Naive thymus-derived CD4-positive, alpha-beta T cell (primary cell): ENCODE measurements at regions of chr2 and their contacts with region 1.

Region 1: GRCh38 chr2:24490674-24491625 is at the start of gene NCOA1:
- DNase-seq: peak; percentile 82 to 92 (median 90)
- ATAC-seq: peak; percentile 91
- H3K4me3 ChIP-seq: peak within 1 kb of the TSS; percentile 63
- H3K4me3 Mint-ChIP-seq: peak within 1 kb of the TSS; percentile 80 to 95 (median 90)
- H3K27ac ChIP-seq: peak within 1 kb of the TSS; percentile 93
- H3K27ac Mint-ChIP-seq: peak within 1 kb of the TSS; percentile 87 to 98 (median 93)
- H3K4me1 ChIP-seq: peaks cover 26 to 48% of the 10 kb centered on the region in 2 donors
- H3K4me1 Mint-ChIP-seq: peaks cover 46 to 62% (median 59%) of the 10 kb centered on the region in 7 donors
- H3K27me3 ChIP-seq: no peaks in the 10 kb centered on the region
- H3K27me3 Mint-ChIP-seq: peaks cover 0 to 11% (median 0%) of the 10 kb centered on the region in 5 donors
- total RNA-seq, gene NCOA1: 20.9 to 72.8 (median 46.6) TPM

Region 2: GRCh38 chr2:24360050-24360962 is 130.6 kb before region 1 on chr2 and contains the start of gene ITSN2:
- CTCF ChIA-PET with region 1: no interaction called
- POLR2A ChIA-PET with region 1: no interaction called
- intact Hi-C with region 1: loop called (anchors 1 kb)
- DNase-seq: peak; percentile 76 to 88 (median 83)
- ATAC-seq: peak; percentile 92
- H3K4me3 ChIP-seq: peak within 1 kb of the TSS; percentile 77
- H3K4me3 Mint-ChIP-seq: peak within 1 kb of the TSS; percentile 88 to 98 (median 92)
- H3K27ac ChIP-seq: peak within 1 kb of the TSS; percentile 99
- H3K27ac Mint-ChIP-seq: peak within 1 kb of the TSS; percentile 91 to 97 (median 95)
- H3K4me1 ChIP-seq: peaks cover 1 to 16% of the 10 kb centered on the region in 2 donors
- H3K4me1 Mint-ChIP-seq: peaks cover 22 to 44% (median 31%) of the 10 kb centered on the region in 7 donors
- H3K27me3 ChIP-seq: no peaks in the 10 kb centered on the region
- H3K27me3 Mint-ChIP-seq: peaks cover 0 to 3% (median 0%) of the 10 kb centered on the region in 5 donors
- total RNA-seq, gene ITSN2: 79.2 to 133 (median 106) TPM

Region 3: DNA sequence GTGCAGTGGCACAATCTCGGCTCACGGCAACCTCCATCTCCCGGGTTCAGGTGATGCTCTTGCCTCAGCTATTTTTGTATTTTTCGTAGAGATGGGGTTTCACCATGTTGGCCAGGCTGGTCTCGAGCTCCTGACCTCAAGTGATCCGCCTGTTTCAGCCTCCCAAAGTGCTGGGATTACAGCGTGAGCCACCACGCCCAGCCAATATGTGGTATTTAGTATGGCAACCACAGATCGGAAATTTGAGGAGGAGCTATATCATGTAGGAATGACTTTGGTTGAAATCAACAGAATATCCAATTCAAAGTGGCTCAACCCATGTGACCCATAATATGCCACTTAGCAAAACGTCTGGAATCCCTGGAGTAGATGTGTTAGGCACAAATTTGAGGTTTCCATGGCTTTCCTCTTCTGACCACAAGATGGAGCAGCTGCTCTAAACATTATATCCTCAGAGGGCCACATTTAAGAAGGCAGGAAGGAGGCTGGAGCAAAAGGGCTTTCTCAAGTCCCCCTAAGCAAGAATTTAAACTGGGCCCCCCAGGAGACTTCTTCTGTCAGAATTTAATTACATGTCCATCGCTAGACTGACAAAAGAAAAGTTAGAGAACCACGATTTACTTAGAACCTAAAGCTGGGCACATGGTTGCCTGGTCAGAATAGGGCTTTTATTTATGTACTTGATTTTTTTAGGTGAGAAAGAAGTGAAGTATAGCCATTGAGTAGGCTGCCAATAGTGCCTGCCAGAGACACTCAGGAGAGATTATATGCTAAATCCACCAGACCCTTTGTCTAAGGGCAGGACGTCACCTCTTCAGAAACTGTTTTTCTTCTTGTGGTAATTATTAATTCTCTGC is 81.0 kb before region 1 on chr2:
- CTCF ChIA-PET with region 1: no interaction called
- POLR2A ChIA-PET with region 1: no interaction called
- intact Hi-C with region 1: loop called in 1 of 2 experiments (anchors 5 kb)
- DNase-seq: peak in 7 of 9 donors; percentile 19 to 59 (median 51)
- ATAC-seq: peak; percentile 79
- H3K4me3 ChIP-seq: no peak overlapping the region
- H3K4me3 Mint-ChIP-seq: no peak overlapping the region
- H3K27ac ChIP-seq: no peak overlapping the region
- H3K27ac Mint-ChIP-seq: no peak overlapping the region
- H3K4me1 ChIP-seq: no peaks in the 10 kb centered on the region
- H3K4me1 Mint-ChIP-seq: no peaks in the 10 kb centered on the region
- H3K27me3 ChIP-seq: no peaks in the 10 kb centered on the region
- H3K27me3 Mint-ChIP-seq: peaks cover 2 to 19% (median 6%) of the 10 kb centered on the region in 5 donors

Region 4: DNA sequence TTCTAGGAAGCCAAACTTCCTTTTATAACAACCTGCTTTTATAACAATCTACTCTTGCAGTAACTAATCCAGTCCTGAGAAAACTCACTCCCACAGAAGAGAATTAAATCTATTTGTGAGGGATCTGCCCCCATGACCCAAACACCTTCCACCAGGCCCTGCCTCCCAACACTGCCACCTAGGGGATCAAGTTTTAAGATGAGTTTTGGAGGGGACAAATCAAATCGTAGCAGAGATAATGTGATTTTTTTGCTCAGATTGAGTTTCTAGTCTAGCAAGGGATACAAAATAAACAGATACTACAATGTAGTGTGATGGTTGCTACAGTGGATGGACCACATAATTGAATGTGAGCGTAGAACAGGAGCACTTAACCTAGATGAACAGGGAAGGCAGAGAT is 52.3 kb after region 1 on chr2:
- CTCF ChIA-PET with region 1: no interaction called
- POLR2A ChIA-PET with region 1: no interaction called
- intact Hi-C with region 1: no loop called
- DNase-seq: no peak
- ATAC-seq: no peak
- H3K4me3 ChIP-seq: no peak overlapping the region
- H3K4me3 Mint-ChIP-seq: peak overlapping the region in 3 of 10 donors; percentile 2 to 37 (median 6)
- H3K27ac ChIP-seq: no peak overlapping the region
- H3K27ac Mint-ChIP-seq: no peak overlapping the region
- H3K4me1 ChIP-seq: peaks cover 0 to 6% of the 10 kb centered on the region in 2 donors
- H3K4me1 Mint-ChIP-seq: peaks cover 16 to 59% (median 40%) of the 10 kb centered on the region in 7 donors
- H3K27me3 ChIP-seq: no peaks in the 10 kb centered on the region
- H3K27me3 Mint-ChIP-seq: no peaks in the 10 kb centered on the region

Region 5: GRCh38 chr2:24577481-24577880 is 86.5 kb after region 1 on chr2:
- CTCF ChIA-PET with region 1: no interaction called
- POLR2A ChIA-PET with region 1: no interaction called
- intact Hi-C with region 1: loop called (anchors 1 to 5 kb)
- DNase-seq: no peak
- ATAC-seq: no peak
- H3K4me3 ChIP-seq: no peak overlapping the region
- H3K4me3 Mint-ChIP-seq: peak overlapping the region in 5 of 10 donors; percentile 16 to 73 (median 61)
- H3K27ac ChIP-seq: no peak overlapping the region
- H3K27ac Mint-ChIP-seq: peak overlapping the region in 3 of 9 donors; percentile 5 to 57 (median 35)
- H3K4me1 ChIP-seq: peaks cover 6 to 18% of the 10 kb centered on the region in 2 donors
- H3K4me1 Mint-ChIP-seq: peaks cover 40 to 81% (median 72%) of the 10 kb centered on the region in 7 donors
- H3K27me3 ChIP-seq: no peaks in the 10 kb centered on the region
- H3K27me3 Mint-ChIP-seq: no peaks in the 10 kb centered on the region

Region 6: GRCh38 chr2:24613154-24613814 is 122.3 kb after region 1 on chr2:
- CTCF ChIA-PET with region 1: no interaction called
- POLR2A ChIA-PET with region 1: no interaction called
- intact Hi-C with region 1: no loop called
- DNase-seq: peak in 1 of 9 donors; percentile 22
- ATAC-seq: peak; percentile 81
- H3K4me3 ChIP-seq: no peak overlapping the region
- H3K4me3 Mint-ChIP-seq: peak overlapping the region in 2 of 10 donors; percentile 1 to 18
- H3K27ac ChIP-seq: no peak overlapping the region
- H3K27ac Mint-ChIP-seq: peak overlapping the region in 2 of 9 donors; percentile 74 to 92
- H3K4me1 ChIP-seq: no peaks in the 10 kb centered on the region
- H3K4me1 Mint-ChIP-seq: peaks cover 10 to 37% (median 26%) of the 10 kb centered on the region in 7 donors
- H3K27me3 ChIP-seq: no peaks in the 10 kb centered on the region
- H3K27me3 Mint-ChIP-seq: no peaks in the 10 kb centered on the region

Region 7: DNA sequence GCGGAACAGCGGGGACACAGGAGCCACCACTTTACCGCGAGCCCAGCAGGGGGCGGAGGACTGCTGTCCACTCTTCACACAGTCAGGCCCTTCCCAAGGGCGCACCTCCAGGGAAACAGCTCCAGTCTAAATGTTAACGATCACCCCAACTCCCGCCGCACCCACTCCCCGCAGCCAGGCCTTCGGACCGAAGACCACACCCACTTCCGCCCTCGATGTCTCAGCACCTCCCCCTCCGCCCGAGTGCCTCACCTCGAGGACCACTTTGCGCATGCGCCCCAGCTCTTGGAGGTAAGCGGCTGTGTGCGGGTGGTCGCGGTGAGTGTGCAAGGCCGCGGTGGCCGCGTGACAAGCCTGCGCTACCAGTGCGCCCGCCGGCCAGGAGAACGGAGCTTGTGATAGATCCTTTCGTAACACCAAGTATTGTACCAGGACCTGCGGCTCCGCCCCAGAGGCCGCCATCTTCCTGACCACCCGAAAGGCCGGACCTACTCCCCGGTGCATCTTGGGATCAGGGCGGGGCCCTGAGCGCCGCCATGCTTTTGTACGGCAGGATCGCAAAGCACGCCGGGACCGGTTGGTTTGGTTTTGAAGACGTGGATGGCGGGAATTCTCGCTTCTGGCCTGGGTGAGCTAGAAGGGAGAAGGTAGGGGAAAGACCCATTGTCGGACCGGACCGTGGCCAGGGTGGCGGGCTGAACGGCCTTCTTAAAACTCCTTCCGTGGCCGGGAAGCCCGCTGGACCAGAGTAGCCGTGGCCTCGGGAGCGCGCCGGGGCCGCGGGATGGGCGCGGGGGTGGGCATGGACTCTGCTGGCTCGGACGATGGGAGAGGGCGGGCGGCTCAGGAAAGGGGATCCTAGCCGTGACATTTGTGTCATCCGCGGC is 302.2 kb after region 1 on chr2 and contains the starts of genes CENPO and PTRHD1:
- CTCF ChIA-PET with region 1: no interaction called
- POLR2A ChIA-PET with region 1: interaction called, 7 read pairs
- intact Hi-C with region 1: loop called (anchors 1 kb)
- DNase-seq: peak; percentile 93 to 99 (median 97)
- ATAC-seq: peak; percentile 98
- H3K4me3 ChIP-seq: peak within 1 kb of the TSS; percentile 97
- H3K4me3 Mint-ChIP-seq: peak within 1 kb of the TSS; percentile 95 to 100 (median 98)
- H3K27ac ChIP-seq: peak within 1 kb of the TSS; percentile 96
- H3K27ac Mint-ChIP-seq: peak within 1 kb of the TSS; percentile 99 to 100 (median 99)
- H3K4me1 ChIP-seq: peaks cover 6 to 10% of the 10 kb centered on the region in 2 donors
- H3K4me1 Mint-ChIP-seq: peaks cover 5 to 53% (median 20%) of the 10 kb centered on the region in 7 donors
- H3K27me3 ChIP-seq: no peaks in the 10 kb centered on the region
- H3K27me3 Mint-ChIP-seq: no peaks in the 10 kb centered on the region
- total RNA-seq, gene CENPO: 3.6 to 36.6 (median 6.0) TPM
- total RNA-seq, gene PTRHD1: 14.3 to 31.5 (median 17.1) TPM